ENCODE measurements at regions of chr3 and their contacts with region 1.

Region 1: DNA sequence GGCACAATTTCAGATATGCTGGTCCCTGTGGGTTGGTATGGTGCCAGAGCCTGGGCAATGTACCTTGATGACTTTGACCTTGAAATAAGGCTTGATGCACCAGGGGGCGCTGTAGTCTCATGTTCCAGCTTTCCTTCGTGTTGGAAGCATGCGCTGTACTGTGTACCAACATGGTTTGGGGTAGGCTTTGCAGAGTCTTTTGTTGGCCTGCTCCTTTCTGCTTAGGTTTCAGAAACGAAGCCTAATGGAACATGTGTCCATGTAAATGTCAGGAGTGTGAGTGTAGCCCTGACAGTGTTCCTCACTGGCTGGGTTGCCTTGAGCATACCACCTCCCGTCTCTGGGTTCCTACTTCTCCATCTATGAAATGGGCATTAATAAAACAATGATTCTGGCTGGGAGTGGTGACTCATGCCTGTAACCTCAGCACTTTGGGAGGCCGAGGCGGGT is 3.6 kb upstream of the CCR4 start:
- DNase-seq: peak; percentile 95
- H3K4me3 Mint-ChIP-seq: no peak overlapping the region
- H3K27ac Mint-ChIP-seq: peak overlapping the region; percentile 49
- H3K4me1 Mint-ChIP-seq: peaks cover 45% of the 10 kb centered on the region
- H3K27me3 Mint-ChIP-seq: no peaks in the 10 kb centered on the region

Region 2: DNA sequence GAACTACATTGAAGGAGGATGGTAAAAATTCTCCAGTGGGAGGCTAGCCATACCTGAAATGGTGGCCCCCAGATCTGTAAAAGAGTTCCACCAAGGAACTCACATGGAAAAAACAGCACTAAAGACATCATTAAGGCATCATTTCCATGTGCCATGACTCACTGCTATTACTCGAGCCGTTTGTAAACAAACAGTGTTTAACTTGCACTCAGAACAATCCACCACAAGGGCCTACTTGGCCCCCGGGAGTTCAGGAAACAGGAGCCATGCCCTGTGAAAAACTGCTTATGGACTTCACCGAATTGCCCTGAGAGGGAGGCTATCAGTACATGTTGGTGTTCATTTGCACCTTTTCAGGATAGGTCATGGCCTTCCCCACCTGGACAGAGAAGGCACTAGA is 21.8 kb after region 1 on chr3:
- CTCF ChIA-PET with region 1: interaction called, 10 read pairs
- DNase-seq: no peak
- H3K4me3 Mint-ChIP-seq: no peak overlapping the region
- H3K27ac Mint-ChIP-seq: no peak overlapping the region
- H3K4me1 Mint-ChIP-seq: peaks cover 22% of the 10 kb centered on the region
- H3K27me3 Mint-ChIP-seq: no peaks in the 10 kb centered on the region

Region 3: DNA sequence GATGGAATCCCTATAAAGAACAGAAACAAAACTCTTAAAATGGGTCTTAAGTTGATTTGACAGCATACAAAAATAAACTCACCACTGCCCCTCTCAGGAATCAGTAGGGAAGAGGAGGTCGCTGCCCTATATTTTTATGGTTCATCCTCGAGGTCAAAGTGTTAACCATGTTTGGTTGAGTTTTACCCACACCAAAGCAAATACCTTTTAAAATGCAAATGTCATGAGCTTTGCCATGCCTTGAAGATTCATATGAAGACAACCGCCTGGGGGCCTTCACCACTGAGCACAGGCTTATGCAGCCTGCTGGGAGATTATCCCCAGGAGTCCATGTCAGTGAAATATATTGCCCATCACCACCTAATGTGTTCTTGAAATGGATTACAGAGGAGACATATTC is 83.0 kb after region 1 on chr3:
- CTCF ChIA-PET with region 1: interaction called, 60 read pairs
- DNase-seq: peak; percentile 53
- H3K4me3 Mint-ChIP-seq: no peak overlapping the region
- H3K27ac Mint-ChIP-seq: no peak overlapping the region
- H3K4me1 Mint-ChIP-seq: peaks cover 33% of the 10 kb centered on the region
- H3K27me3 Mint-ChIP-seq: no peaks in the 10 kb centered on the region

Region 4: GRCh38 chr3:33074217-33075067 is 126.6 kb after region 1 on chr3:
- CTCF ChIA-PET with region 1: interaction called, 118 read pairs
- DNase-seq: peak; percentile 79
- H3K4me3 Mint-ChIP-seq: no peak overlapping the region
- H3K27ac Mint-ChIP-seq: no peak overlapping the region
- H3K4me1 Mint-ChIP-seq: peaks cover 44% of the 10 kb centered on the region
- H3K27me3 Mint-ChIP-seq: no peaks in the 10 kb centered on the region

Region 5: GRCh38 chr3:33372218-33373081 is 424.6 kb after region 1 on chr3:
- CTCF ChIA-PET with region 1: interaction called, 36 read pairs
- DNase-seq: peak; percentile 64
- H3K4me3 Mint-ChIP-seq: no peak overlapping the region
- H3K27ac Mint-ChIP-seq: no peak overlapping the region
- H3K4me1 Mint-ChIP-seq: no peaks in the 10 kb centered on the region
- H3K27me3 Mint-ChIP-seq: peaks cover 13% of the 10 kb centered on the region